ENCODE measurements at regions of chr2 and their contacts with region 1.

Region 1: DNA sequence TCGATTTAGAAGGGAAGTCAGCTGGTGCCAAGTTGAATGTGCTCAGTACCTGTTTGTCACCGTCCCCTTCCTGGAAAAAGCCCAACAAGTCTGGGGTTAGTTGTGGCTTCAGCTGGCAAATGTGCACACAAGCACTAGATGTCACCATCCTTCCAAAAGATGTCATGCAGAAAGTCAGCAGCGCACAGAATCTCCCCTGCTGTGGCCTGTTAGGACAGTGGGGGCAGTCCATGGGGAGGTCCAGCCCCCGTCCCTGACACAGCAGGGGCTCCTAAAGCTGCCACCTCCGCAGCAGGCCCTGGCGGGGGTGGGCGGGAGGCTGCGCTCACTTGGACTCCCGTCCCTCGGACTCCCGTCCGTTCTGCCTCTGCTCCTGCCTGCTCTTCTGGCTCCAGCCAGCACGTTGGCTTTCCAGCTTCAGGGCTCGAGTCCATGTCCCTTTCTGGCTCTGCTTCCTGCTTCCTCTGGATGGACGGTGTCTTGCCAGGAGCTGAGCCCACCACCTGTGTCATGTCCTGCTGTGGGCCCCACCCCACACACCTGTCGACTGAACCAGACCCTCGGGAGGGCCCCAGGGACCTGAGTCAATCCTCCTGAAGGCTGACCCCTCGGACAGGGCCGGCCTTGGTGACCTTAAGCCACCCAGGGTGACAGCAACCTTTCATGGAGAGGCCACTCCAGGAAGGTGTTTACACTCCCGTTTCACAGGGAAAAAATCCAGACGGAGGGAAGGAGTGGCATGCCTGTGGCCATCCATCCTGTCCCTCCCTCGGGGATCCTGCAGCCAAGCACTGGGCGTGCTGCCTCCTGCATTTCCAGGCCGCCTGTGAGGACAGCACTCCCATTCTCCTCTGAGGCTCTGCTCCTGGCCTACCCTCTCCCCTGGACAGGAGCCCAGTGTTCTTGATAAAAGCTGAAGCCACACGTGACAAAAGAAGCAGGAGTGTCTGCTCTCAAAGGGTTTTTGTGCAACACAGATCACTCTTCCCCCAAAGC is 8.5 kb downstream of the RAB17 start:
- DNase-seq: peak; percentile 35
- ATAC-seq: peak; percentile 90
- H3K4me3 ChIP-seq: no peak overlapping the region
- H3K27ac ChIP-seq: no peak overlapping the region
- H3K4me1 ChIP-seq: no peaks in the 10 kb centered on the region
- H3K27me3 ChIP-seq: no peaks in the 10 kb centered on the region; a peak in 1 of 4 replicates
- CTCF ChIP-seq: peak; percentile 38 to 73 (median 53); a peak in 5 of 6 replicates
- EP300 ChIP-seq: no peak
- POLR2A ChIP-seq: no peak
- RAD21 ChIP-seq: peak; percentile 72

Region 2: DNA sequence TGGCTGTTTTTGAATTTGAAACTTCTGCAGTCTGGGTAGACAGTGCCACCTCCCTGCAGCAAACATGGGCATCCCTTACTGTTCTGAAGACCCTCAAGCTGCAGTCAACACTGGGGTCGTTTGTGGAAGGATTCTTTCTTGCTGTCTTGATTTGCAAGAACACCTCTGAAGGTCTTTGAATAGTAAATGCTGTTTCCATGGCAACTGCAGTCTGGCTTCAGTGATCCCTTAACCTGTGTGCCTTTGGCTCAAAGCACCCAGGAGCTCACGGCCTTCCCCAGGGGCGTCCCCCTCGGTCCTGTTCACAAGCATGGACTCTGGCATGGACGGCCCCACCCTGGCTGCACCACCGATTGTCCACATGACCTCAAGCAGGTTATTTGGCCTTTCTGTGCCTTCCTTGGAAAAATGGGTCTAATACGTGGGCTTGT is 83.7 kb after region 1 on chr2:
- CTCF ChIA-PET with region 1: interaction called, 16 read pairs
- POLR2A ChIA-PET with region 1: no interaction called
- RAD21 ChIA-PET with region 1: interaction called, 4 read pairs
- SMC1A ChIA-PET with region 1: interaction called, 9 read pairs
- in situ Hi-C with region 1: no loop called
- intact Hi-C with region 1: no loop called
- DNase-seq: no peak
- ATAC-seq: peak; percentile 60
- H3K4me3 ChIP-seq: no peak overlapping the region
- H3K27ac ChIP-seq: no peak overlapping the region
- H3K4me1 ChIP-seq: peaks cover 18% of the 10 kb centered on the region
- H3K27me3 ChIP-seq: peaks cover 0 to 8% of the 10 kb centered on the region in 2 experiments; a peak in 2 of 4 replicates
- CTCF ChIP-seq: peak in 1 of 3 experiments; percentile 29; a peak in 1 of 6 replicates
- EP300 ChIP-seq: no peak
- POLR2A ChIP-seq: no peak
- RAD21 ChIP-seq: no peak

Measured in GM12878 (cell line).